ENCODE measurements at regions of chr19 and their contacts with region 1.

Region 1: DNA sequence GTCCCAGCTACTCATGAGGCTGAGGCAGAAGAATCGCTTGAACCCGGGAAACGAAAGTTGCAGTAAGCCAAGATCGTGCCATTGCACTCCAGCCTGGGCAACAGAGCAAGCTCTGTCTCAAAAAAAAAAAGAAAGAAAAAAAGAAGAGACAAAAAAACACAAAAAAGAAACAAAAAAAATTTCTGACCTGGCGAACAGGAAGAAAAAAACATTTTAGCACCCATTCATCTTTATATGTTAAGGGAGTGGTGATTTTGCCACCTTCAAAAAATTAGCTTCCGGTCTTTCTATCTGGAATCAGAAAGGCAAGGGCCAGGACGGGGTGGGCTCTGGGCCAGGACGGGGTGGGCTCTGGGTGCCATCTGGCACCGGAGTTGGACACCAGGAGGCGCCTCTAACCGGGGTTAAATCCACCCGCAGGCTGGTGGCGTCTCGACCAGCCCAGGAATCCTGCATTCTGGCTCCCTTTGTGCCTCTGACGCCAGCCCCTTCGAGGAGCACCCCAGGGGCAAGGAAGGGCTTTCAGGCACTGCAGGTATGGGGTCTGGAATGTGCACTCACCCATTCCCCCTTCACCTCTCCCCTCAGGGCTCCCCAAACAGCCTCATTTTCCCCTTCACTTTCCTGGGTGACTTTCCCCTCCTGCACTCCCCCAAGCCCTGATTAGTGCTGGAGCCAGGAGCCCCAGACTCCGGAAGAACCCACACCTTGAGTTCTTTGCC is 10.4 kb upstream of the ZSWIM4 start:
- DNase-seq: peak; percentile 77
- H3K4me3 Mint-ChIP-seq: peak overlapping the region; percentile 25
- H3K27ac Mint-ChIP-seq: peak overlapping the region; percentile 56
- H3K4me1 Mint-ChIP-seq: peaks cover 47% of the 10 kb centered on the region
- H3K27me3 Mint-ChIP-seq: no peaks in the 10 kb centered on the region

Region 2: DNA sequence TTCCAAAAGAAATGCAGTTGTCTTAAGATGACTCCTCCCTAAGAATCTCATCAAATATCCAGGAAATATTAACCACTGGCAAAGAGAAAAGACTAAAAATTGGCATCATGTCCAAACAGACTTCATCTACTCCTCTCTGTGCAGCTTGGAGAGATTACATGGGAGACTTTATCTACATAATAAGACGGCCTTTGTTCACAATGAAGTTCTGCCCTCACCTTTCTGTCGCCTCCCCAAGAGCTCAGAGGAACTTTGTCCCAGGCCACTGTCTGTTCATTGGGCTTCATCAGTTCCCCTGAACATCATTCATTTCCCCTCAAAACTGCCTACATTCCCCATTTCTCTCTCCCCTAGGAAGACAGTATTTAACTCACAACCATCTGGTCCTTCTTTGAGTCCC is 43.0 kb before region 1 on chr19:
- CTCF ChIA-PET with region 1: no interaction called
- POLR2A ChIA-PET with region 1: no interaction called
- DNase-seq: no peak
- H3K4me3 Mint-ChIP-seq: no peak overlapping the region
- H3K27ac Mint-ChIP-seq: no peak overlapping the region
- H3K4me1 Mint-ChIP-seq: peaks cover 2% of the 10 kb centered on the region
- H3K27me3 Mint-ChIP-seq: no peaks in the 10 kb centered on the region

Region 3: DNA sequence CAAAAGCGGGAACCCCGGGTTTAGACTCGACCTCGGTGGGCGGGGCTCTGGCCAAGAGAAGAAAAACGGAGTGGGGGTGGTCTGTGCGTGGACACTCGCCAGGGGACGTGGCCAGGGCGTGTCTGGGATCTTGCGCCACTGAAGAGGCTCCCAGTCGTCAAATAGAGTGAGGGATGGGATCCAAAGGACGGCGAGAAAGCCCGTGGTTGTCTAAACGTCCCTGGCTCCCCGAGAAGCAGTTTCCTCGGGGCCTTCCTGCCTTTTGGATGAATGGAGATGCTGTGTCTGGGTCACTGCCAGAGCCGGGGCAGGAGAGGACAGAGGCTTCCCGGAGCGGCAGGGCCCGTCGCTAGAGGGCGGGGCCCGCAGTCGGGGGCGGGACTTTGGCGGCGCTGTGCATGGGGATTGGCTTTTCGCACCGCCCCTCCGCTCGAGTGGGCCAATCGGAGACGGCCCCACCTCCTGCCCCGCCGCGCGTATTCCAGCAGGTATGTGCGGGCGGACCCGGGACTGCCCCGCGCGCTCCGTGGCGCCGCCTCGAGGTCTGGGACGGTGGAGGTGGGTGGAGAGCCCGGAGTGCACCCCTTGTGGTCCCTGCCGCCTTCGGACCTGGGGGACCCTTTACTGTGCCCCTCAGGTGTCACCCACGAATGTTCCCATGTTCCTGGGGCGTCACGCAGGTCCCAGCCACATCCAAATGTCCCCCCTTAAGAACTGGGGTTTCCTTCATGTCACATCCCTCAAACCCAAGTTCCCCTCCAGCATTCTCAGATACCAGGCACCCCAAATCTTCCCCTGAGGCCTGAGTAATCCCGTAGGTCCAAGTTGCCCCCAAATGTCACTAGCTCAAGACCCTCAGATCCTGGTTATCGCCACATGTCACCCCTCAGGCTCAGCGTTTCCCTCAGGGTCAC is 48.7 kb after region 1 on chr19:
- CTCF ChIA-PET with region 1: interaction called, 11 read pairs
- POLR2A ChIA-PET with region 1: interaction called, 48 read pairs
- DNase-seq: peak; percentile 94
- H3K4me3 Mint-ChIP-seq: peak overlapping the region; percentile 74
- H3K27ac Mint-ChIP-seq: peak overlapping the region; percentile 70
- H3K4me1 Mint-ChIP-seq: peaks cover 47% of the 10 kb centered on the region
- H3K27me3 Mint-ChIP-seq: no peaks in the 10 kb centered on the region

Region 4: GRCh38 chr19:13839130-13839937 is 54.4 kb after region 1 on chr19:
- CTCF ChIA-PET with region 1: interaction called, 11 read pairs
- POLR2A ChIA-PET with region 1: interaction called, 48 read pairs
- DNase-seq: peak; percentile 89
- H3K4me3 Mint-ChIP-seq: peak overlapping the region; percentile 98
- H3K27ac Mint-ChIP-seq: peak overlapping the region; percentile 87
- H3K4me1 Mint-ChIP-seq: peaks cover 49% of the 10 kb centered on the region
- H3K27me3 Mint-ChIP-seq: no peaks in the 10 kb centered on the region

Region 5: DNA sequence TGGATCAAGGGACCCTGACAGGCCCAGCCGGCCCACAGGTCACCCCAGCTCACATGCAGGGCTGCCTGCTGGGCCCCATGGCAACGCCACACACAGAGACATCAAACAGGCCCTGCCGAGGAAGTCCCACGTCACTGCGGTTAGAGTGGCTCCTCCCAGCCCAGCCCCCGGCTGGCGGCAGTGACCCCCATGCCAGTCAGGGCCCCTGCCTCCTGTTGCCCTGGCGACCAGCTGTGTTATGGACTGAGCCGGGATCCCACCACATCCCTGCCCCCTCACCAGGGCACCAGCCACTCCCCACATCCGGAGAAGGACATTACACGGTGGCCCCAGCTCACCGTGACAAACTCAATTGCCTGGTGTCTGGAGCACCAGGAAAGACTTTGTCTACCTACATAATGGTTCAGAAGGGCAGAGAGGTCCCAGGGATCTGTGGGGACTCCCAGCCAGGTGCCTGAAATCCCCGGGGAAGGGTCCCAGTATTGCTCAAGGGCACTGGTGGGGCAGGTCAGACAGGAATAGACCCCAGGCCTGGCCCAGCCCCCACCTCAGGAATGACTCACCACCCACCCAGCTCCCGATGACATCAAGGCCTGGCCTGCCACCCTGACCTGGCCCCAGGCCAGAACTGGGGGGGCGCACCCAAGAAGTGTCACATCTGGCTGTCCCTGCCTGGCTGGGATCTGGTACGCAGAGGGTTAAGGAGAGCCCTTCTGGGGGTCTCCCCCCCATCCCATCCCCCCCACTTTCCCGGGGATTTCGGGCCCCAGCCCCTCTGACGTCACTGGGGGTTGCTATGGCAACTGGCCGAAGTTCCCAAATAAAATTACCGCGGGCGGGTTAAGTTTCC is 61.9 kb after region 1 on chr19:
- CTCF ChIA-PET with region 1: interaction called, 4 read pairs
- POLR2A ChIA-PET with region 1: interaction called, 37 read pairs
- DNase-seq: peak; percentile 96
- H3K4me3 Mint-ChIP-seq: peak overlapping the region; percentile 80
- H3K27ac Mint-ChIP-seq: peak overlapping the region; percentile 99
- H3K4me1 Mint-ChIP-seq: peaks cover 59% of the 10 kb centered on the region
- H3K27me3 Mint-ChIP-seq: no peaks in the 10 kb centered on the region